Activated B cell treated with CpG ODN at 0.5 μM for 24 hours (primary cell): ENCODE measurements at regions of chr6 and their contacts with region 1.

Region 1: DNA sequence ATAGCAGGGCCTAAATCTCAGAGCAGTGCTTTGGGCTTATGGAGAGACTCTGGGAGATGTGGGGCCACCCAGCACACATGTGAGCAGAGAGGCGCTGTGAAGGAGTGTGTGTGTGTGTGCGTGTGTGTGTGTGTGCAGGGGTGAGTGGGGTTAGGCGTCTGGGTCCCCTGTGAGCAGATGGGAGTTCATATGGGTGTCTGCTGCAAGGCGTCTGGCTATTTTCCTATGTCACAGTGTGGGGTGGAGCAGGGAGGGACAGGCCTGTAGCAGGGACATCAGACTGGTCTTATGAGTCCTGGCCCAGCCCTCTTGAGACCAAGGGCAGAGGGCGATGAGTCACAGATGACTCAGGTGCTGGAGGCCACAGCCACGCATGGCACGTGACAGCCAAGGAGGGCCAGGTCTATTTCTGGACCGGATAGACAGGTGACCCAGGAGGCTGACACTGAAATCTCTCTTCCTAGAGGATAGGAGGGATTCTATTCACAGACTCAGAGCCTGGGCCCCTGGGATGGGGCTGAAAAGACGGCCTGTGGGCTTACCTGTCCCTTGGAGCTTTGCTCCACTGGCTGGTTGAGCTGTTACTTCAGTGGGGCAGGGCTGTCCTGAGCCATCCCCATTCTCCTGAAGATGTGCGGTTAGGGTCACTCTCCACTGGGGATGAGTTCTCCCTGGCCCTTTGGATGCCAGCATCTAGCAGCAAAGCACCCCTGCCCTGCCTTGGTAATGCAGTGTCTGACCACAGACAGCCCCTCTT is 28.9 kb downstream of the VEGFA start:
- DNase-seq: no peak
- ATAC-seq: peak; percentile 62
- H3K4me3 Mint-ChIP-seq: no peak overlapping the region
- H3K27ac Mint-ChIP-seq: no peak overlapping the region
- H3K4me1 Mint-ChIP-seq: peaks cover 17% of the 10 kb centered on the region
- H3K27me3 Mint-ChIP-seq: no peaks in the 10 kb centered on the region
- CTCF ChIP-seq: no peak

Region 2: GRCh38 chr6:43774776-43775534 is 23.9 kb before region 1 on chr6:
- CTCF ChIA-PET with region 1: interaction called, 4 read pairs
- POLR2A ChIA-PET with region 1: no interaction called
- intact Hi-C with region 1: loop called (anchors 2 kb)
- DNase-seq: peak; percentile 40
- ATAC-seq: no peak
- H3K4me3 Mint-ChIP-seq: peak overlapping the region; percentile 7
- H3K27ac Mint-ChIP-seq: no peak overlapping the region
- H3K4me1 Mint-ChIP-seq: peaks cover 40% of the 10 kb centered on the region
- H3K27me3 Mint-ChIP-seq: peaks cover 14% of the 10 kb centered on the region
- CTCF ChIP-seq: peak; percentile 54